Heart left ventricle (tissue), 16 donors: ENCODE measurements at regions of chr3 and their contacts with region 1.

Region 1: GRCh38 chr3:39208463-39209055 is 16.2 kb upstream of the XIRP1 start:
- DNase-seq: peak in 4 of 5 donors; percentile 65 to 72 (median 68)
- ATAC-seq: peak; percentile 85 to 95 (median 92)
- H3K4me3 ChIP-seq: no peak overlapping the region
- H3K27ac ChIP-seq: peak overlapping the region in 6 of 12 donors; percentile 16 to 51 (median 36)
- H3K4me1 ChIP-seq: peaks cover 0 to 17% (median 5%) of the 10 kb centered on the region in 12 donors
- H3K27me3 ChIP-seq: no peaks in the 10 kb centered on the region
- CTCF ChIP-seq: peak; percentile 53 to 81 (median 65)
- POLR2A ChIP-seq: no peak

Region 2: GRCh38 chr3:37882711-37883110 is 1325.8 kb before region 1 on chr3:
- intact Hi-C with region 1: no loop called
- DNase-seq: no peak
- ATAC-seq: peak in 3 of 4 donors; percentile 59 to 72 (median 70)
- H3K4me3 ChIP-seq: no peak overlapping the region
- H3K27ac ChIP-seq: peak overlapping the region in 6 of 12 donors; percentile 0 to 54 (median 34)
- H3K4me1 ChIP-seq: peaks cover 0 to 68% (median 45%) of the 10 kb centered on the region in 12 donors
- H3K27me3 ChIP-seq: no peaks in the 10 kb centered on the region
- CTCF ChIP-seq: no peak
- POLR2A ChIP-seq: no peak

Region 3: DNA sequence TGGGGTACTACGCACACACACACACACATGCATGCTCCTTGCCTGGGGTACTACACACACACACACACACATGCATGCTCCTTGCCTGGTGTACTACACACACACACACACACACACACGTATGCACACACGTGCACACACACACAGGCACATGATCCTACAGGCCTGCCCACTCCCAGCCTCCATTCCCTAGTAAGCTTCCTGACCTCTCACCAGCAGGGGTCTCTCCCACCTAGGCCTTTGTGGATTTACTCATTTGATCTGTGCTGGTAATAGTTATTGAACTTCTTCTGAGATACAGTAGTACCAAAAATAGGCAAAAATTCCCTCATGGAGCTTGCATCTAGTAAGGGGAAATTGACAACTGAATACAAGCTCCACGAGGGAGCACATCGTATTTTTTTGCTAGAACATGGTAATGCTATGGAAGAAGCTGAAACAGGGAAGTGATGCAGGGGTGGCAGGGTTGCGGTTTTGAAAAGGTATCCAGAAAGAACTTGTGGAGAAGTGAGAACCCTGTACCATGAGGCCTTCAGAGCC is 82.0 kb before region 1 on chr3:
- intact Hi-C with region 1: loop called in 1 of 10 experiments (anchors 5 kb)
- DNase-seq: peak in 2 of 5 donors; percentile 45 to 69
- ATAC-seq: peak; percentile 62 to 85 (median 79)
- H3K4me3 ChIP-seq: no peak overlapping the region
- H3K27ac ChIP-seq: no peak overlapping the region
- H3K4me1 ChIP-seq: peaks cover 0 to 17% (median 3%) of the 10 kb centered on the region in 12 donors
- H3K27me3 ChIP-seq: no peaks in the 10 kb centered on the region
- CTCF ChIP-seq: peak; percentile 45 to 77 (median 62)
- POLR2A ChIP-seq: no peak

Region 4: GRCh38 chr3:39262846-39263245 is 54.3 kb after region 1 on chr3:
- intact Hi-C with region 1: loop called in 1 of 10 experiments (anchors 2 kb)
- DNase-seq: no peak
- ATAC-seq: no peak
- H3K4me3 ChIP-seq: no peak overlapping the region
- H3K27ac ChIP-seq: no peak overlapping the region
- H3K4me1 ChIP-seq: peaks cover 0 to 60% (median 8%) of the 10 kb centered on the region in 12 donors
- H3K27me3 ChIP-seq: no peaks in the 10 kb centered on the region
- CTCF ChIP-seq: no peak
- POLR2A ChIP-seq: no peak

Region 5: GRCh38 chr3:39279745-39280517 is 71.4 kb after region 1 on chr3 and contains the start of gene CX3CR1:
- intact Hi-C with region 1: loop called in 4 of 10 experiments (anchors 5 kb)
- DNase-seq: peak in 1 of 5 donors; percentile 35
- ATAC-seq: peak in 3 of 4 donors; percentile 35 to 79 (median 72)
- H3K4me3 ChIP-seq: peak within 1 kb of the TSS in 6 of 12 donors; percentile 0 to 43 (median 28)
- H3K27ac ChIP-seq: peak within 1 kb of the TSS in 3 of 12 donors; percentile 18 to 64 (median 53)
- H3K4me1 ChIP-seq: peaks cover 0 to 49% (median 6%) of the 10 kb centered on the region in 12 donors
- H3K27me3 ChIP-seq: no peaks in the 10 kb centered on the region
- CTCF ChIP-seq: peak in 1 of 12 donors; percentile 17
- POLR2A ChIP-seq: no peak
- total RNA-seq, gene CX3CR1: 0.20 to 11.4 (median 1.2) TPM